B cell (primary cell): ENCODE measurements at regions of chr17 and their contacts with region 1.

Region 1: GRCh38 chr17:56833809-56834379 is at the starts of genes C17orf67 and DGKE:
- DNase-seq: peak; percentile 98
- ATAC-seq: peak; percentile 91
- H3K4me3 ChIP-seq: peak within 1 kb of the TSS; percentile 27 to 86 (median 76)
- H3K4me3 Mint-ChIP-seq: peak within 1 kb of the TSS; percentile 95
- H3K27ac ChIP-seq: peak within 1 kb of the TSS; percentile 45 to 78
- H3K27ac Mint-ChIP-seq: peak within 1 kb of the TSS; percentile 93
- H3K4me1 ChIP-seq: peaks cover 21 to 24% of the 10 kb centered on the region in 2 donors
- H3K4me1 Mint-ChIP-seq: peaks cover 43% of the 10 kb centered on the region
- H3K27me3 ChIP-seq: no peaks in the 10 kb centered on the region
- H3K27me3 Mint-ChIP-seq: no peaks in the 10 kb centered on the region
- CTCF ChIP-seq: no peak
- total RNA-seq, gene C17orf67: 10.0 and 10.6 TPM in 2 replicates
- total RNA-seq, gene DGKE: 28.1 and 33.9 TPM in 2 replicates

Region 2: DNA sequence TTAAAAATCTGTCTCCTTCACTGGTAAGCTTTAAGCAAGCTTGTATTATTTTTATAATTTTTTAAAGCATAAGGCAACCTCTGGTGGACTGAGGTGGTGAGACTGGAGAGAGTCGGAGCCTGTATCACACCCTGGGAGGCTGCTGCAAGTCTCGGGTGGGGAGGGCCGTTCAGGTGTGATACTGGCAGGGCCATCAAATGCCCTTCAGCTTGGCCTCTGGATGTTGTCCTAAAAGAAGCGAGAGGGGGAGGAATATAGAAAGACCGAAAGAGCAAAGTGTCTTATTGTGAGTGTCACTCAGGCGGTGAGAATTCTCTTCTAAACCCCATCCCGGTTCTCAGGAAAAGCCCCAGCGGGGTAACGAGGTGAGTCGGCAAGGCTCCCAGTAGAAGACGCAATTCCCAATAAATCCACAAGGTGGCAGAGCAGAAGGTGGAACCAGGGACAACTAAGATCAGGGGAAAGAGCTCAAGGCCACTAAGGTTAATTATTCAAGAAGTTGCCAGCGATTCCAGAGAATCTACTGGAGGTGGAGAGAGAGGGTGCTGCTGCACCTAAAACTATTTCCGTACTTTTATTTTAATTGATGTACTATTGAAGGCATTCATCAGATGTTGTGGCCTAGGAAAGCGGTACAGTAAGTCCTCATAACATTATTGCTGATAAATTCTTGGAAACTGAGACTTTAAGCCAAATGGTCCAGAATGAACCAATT is 14.3 kb before region 1 on chr17:
- CTCF ChIA-PET with region 1: interaction called, 37 read pairs
- POLR2A ChIA-PET with region 1: no interaction called
- intact Hi-C with region 1: loop called (anchors 1 kb)
- DNase-seq: peak; percentile 83
- ATAC-seq: peak; percentile 89
- H3K4me3 ChIP-seq: no peak overlapping the region
- H3K4me3 Mint-ChIP-seq: no peak overlapping the region
- H3K27ac ChIP-seq: no peak overlapping the region
- H3K27ac Mint-ChIP-seq: peak overlapping the region; percentile 50
- H3K4me1 ChIP-seq: peaks cover 3 to 6% of the 10 kb centered on the region in 2 donors
- H3K4me1 Mint-ChIP-seq: peaks cover 4% of the 10 kb centered on the region
- H3K27me3 ChIP-seq: no peaks in the 10 kb centered on the region
- H3K27me3 Mint-ChIP-seq: no peaks in the 10 kb centered on the region
- CTCF ChIP-seq: peak; percentile 87

Region 3: GRCh38 chr17:56876766-56877179 is 42.9 kb after region 1 on chr17:
- CTCF ChIA-PET with region 1: no interaction called
- POLR2A ChIA-PET with region 1: no interaction called
- intact Hi-C with region 1: no loop called
- DNase-seq: no peak
- ATAC-seq: no peak
- H3K4me3 ChIP-seq: no peak overlapping the region
- H3K4me3 Mint-ChIP-seq: no peak overlapping the region
- H3K27ac ChIP-seq: no peak overlapping the region
- H3K27ac Mint-ChIP-seq: no peak overlapping the region
- H3K4me1 ChIP-seq: peaks cover 0 to 3% of the 10 kb centered on the region in 2 donors
- H3K4me1 Mint-ChIP-seq: peaks cover 4% of the 10 kb centered on the region
- H3K27me3 ChIP-seq: no peaks in the 10 kb centered on the region
- H3K27me3 Mint-ChIP-seq: no peaks in the 10 kb centered on the region
- CTCF ChIP-seq: no peak

Region 4: DNA sequence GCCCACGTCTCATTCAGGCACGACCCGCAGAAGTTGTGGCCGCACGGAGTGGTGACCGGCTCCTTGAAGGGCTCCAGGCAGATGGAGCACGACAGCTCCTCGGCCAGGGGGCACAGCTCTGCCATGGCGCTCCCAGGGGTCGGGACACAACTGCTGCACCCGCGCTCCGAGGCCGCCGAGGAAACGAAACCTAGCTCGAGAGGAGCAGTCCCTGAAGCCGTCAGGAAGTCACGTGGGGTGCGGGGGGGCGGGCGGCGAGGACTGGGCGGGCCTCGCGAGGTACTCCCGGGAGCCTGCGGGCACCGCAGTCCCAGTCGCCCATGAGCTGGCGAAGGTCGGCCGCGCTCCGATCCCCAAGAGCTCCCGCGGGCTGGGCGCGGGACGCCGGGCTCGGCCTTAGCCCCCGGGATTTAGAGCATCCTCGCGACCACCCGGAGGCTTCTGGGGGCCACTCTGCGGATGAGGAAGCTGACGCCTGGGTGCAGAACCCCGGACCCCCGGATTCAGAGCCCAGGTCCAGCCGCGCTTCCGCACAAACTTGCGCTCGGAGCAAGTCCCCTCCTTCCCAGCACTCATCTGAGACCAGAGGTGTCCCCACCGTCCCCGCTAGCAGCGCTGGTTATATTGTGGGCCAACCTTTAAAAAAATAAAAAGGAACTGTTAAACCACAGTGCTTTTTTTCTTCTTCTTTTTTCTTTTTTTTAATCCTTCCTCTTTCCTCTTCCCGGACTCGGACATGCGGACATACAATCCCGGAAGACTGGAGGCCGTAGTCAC is 80.2 kb after region 1 on chr17 and contains the start of gene TRIM25:
- CTCF ChIA-PET with region 1: interaction called, 7 read pairs
- POLR2A ChIA-PET with region 1: interaction called, 27 read pairs
- intact Hi-C with region 1: loop called (anchors 1 kb)
- DNase-seq: peak; percentile 93
- ATAC-seq: peak; percentile 88
- H3K4me3 ChIP-seq: peak within 1 kb of the TSS; percentile 83 to 93 (median 86)
- H3K4me3 Mint-ChIP-seq: peak within 1 kb of the TSS; percentile 98
- H3K27ac ChIP-seq: peak within 1 kb of the TSS; percentile 71 to 84
- H3K27ac Mint-ChIP-seq: peak within 1 kb of the TSS; percentile 94
- H3K4me1 ChIP-seq: peaks cover 47 to 54% of the 10 kb centered on the region in 2 donors
- H3K4me1 Mint-ChIP-seq: peaks cover 59% of the 10 kb centered on the region
- H3K27me3 ChIP-seq: no peaks in the 10 kb centered on the region
- H3K27me3 Mint-ChIP-seq: no peaks in the 10 kb centered on the region
- CTCF ChIP-seq: no peak
- total RNA-seq, gene TRIM25: 87.4 and 92.4 TPM in 2 replicates

Region 5: GRCh38 chr17:56977673-56978395 is 143.9 kb after region 1 on chr17 and contains the start of gene SCPEP1:
- CTCF ChIA-PET with region 1: no interaction called
- POLR2A ChIA-PET with region 1: interaction called, 4 read pairs
- intact Hi-C with region 1: loop called (anchors 1 kb)
- DNase-seq: peak; percentile 83
- ATAC-seq: peak; percentile 98
- H3K4me3 ChIP-seq: peak within 1 kb of the TSS; percentile 65 to 87 (median 74)
- H3K4me3 Mint-ChIP-seq: peak within 1 kb of the TSS; percentile 96
- H3K27ac ChIP-seq: peak within 1 kb of the TSS; percentile 44 to 76
- H3K27ac Mint-ChIP-seq: peak within 1 kb of the TSS; percentile 95
- H3K4me1 ChIP-seq: peaks cover 13 to 24% of the 10 kb centered on the region in 2 donors
- H3K4me1 Mint-ChIP-seq: peaks cover 34% of the 10 kb centered on the region
- H3K27me3 ChIP-seq: no peaks in the 10 kb centered on the region
- H3K27me3 Mint-ChIP-seq: no peaks in the 10 kb centered on the region
- CTCF ChIP-seq: no peak
- total RNA-seq, gene SCPEP1: 66.6 and 66.9 TPM in 2 replicates

Region 6: GRCh38 chr17:57255776-57256681 is 422.1 kb after region 1 on chr17 and contains the start of gene MSI2:
- CTCF ChIA-PET with region 1: no interaction called
- POLR2A ChIA-PET with region 1: no interaction called
- intact Hi-C with region 1: loop called (anchors 5 kb)
- DNase-seq: peak; percentile 94
- ATAC-seq: peak; percentile 79
- H3K4me3 ChIP-seq: peak within 1 kb of the TSS; percentile 67 to 97 (median 76)
- H3K4me3 Mint-ChIP-seq: peak within 1 kb of the TSS; percentile 92
- H3K27ac ChIP-seq: peak within 1 kb of the TSS; percentile 65 to 66
- H3K27ac Mint-ChIP-seq: peak within 1 kb of the TSS; percentile 85
- H3K4me1 ChIP-seq: peaks cover 34 to 44% of the 10 kb centered on the region in 2 donors
- H3K4me1 Mint-ChIP-seq: peaks cover 38% of the 10 kb centered on the region
- H3K27me3 ChIP-seq: no peaks in the 10 kb centered on the region
- H3K27me3 Mint-ChIP-seq: no peaks in the 10 kb centered on the region
- CTCF ChIP-seq: no peak
- total RNA-seq, gene MSI2: 196 and 222 TPM in 2 replicates

Region 7: GRCh38 chr17:58082870-58083490 is 1249.1 kb after region 1 on chr17 and contains the start of gene DYNLL2:
- CTCF ChIA-PET with region 1: no interaction called
- POLR2A ChIA-PET with region 1: no interaction called
- intact Hi-C with region 1: loop called (anchors 10 kb)
- DNase-seq: peak; percentile 90
- ATAC-seq: peak; percentile 80
- H3K4me3 ChIP-seq: peak within 1 kb of the TSS; percentile 70 to 89 (median 79)
- H3K4me3 Mint-ChIP-seq: peak within 1 kb of the TSS; percentile 87
- H3K27ac ChIP-seq: peak within 1 kb of the TSS; percentile 66 to 86
- H3K27ac Mint-ChIP-seq: peak within 1 kb of the TSS; percentile 81
- H3K4me1 ChIP-seq: peaks cover 16 to 19% of the 10 kb centered on the region in 2 donors
- H3K4me1 Mint-ChIP-seq: peaks cover 31% of the 10 kb centered on the region
- H3K27me3 ChIP-seq: peaks cover 0 to 5% (median 0%) of the 10 kb centered on the region in 4 experiments
- H3K27me3 Mint-ChIP-seq: no peaks in the 10 kb centered on the region
- CTCF ChIP-seq: no peak
- total RNA-seq, gene DYNLL2: 24.4 and 25.2 TPM in 2 replicates